GM18951 (cell line): ENCODE measurements at regions of chrX and their contacts with region 1.

Region 1: GRCh38 chrX:107776649-107777535 is 641 bp upstream of the NCBP2L start:
- POLR2A ChIP-seq: no peak

Region 2: GRCh38 chrX:107659768-107660167 is 117.1 kb before region 1 on chrX:
- in situ Hi-C with region 1: loop called (anchors 5 kb)
- POLR2A ChIP-seq: no peak

Region 3: DNA sequence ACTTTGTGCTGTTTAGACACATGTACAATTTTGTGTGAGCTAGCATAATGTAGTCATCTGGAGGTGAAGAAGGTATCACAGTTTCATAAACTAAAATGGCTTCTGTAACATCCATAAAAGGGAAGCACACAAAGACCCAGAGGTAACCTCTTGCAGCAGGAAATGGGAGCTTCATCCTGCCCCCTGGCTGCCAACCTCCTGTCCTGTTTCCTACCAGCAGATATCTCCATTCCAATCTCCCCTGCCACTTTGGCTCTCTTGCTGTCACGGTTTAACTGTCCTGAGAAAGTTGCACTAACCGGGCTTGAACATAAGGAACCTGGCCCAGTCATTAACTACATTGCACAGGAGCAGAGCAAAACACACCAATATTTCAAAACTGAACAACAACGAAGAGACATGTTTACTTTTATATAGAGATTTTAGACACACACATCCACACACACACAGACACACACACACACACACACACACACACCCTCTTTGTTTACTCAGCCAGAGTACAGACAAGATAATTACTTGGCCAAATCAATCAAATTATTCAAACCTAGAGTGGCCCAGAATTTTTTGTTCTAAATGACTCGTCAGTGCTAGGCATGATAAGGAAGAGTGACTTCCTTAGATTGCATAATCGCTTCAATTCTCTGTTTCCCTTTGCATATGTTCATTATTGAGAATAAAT is 73.0 kb after region 1 on chrX:
- in situ Hi-C with region 1: no loop called
- POLR2A ChIP-seq: no peak

Region 4: GRCh38 chrX:108036298-108036973 is 259.5 kb after region 1 on chrX:
- in situ Hi-C with region 1: no loop called
- POLR2A ChIP-seq: no peak